Panc1 (cell line): ENCODE measurements at regions of chr11 and their contacts with region 1.

Region 1: GRCh38 chr11:62233730-62234129 is 8.3 kb upstream of the SCGB1D2 start:
- DNase-seq: no peak
- ATAC-seq: no peak
- H3K4me3 ChIP-seq: no peak overlapping the region
- H3K27ac ChIP-seq: no peak overlapping the region
- H3K4me1 ChIP-seq: no peaks in the 10 kb centered on the region
- H3K27me3 ChIP-seq: peaks cover 6% of the 10 kb centered on the region
- CTCF ChIP-seq: peak; percentile 55; the same call in 1 of the 2 replicates

Region 2: GRCh38 chr11:62309991-62310390 is 76.3 kb after region 1 on chr11:
- CTCF ChIA-PET with region 1: interaction called, 3 read pairs
- POLR2A ChIA-PET with region 1: no interaction called
- in situ Hi-C with region 1: no loop called
- intact Hi-C with region 1: loop called (anchors 5 kb)
- DNase-seq: no peak
- ATAC-seq: no peak
- H3K4me3 ChIP-seq: no peak overlapping the region
- H3K27ac ChIP-seq: no peak overlapping the region
- H3K4me1 ChIP-seq: no peaks in the 10 kb centered on the region
- H3K27me3 ChIP-seq: no peaks in the 10 kb centered on the region
- CTCF ChIP-seq: no peak